CD4-positive, alpha-beta T cell (primary cell): ENCODE measurements at regions of chr3 and their contacts with region 1.

Region 1: DNA sequence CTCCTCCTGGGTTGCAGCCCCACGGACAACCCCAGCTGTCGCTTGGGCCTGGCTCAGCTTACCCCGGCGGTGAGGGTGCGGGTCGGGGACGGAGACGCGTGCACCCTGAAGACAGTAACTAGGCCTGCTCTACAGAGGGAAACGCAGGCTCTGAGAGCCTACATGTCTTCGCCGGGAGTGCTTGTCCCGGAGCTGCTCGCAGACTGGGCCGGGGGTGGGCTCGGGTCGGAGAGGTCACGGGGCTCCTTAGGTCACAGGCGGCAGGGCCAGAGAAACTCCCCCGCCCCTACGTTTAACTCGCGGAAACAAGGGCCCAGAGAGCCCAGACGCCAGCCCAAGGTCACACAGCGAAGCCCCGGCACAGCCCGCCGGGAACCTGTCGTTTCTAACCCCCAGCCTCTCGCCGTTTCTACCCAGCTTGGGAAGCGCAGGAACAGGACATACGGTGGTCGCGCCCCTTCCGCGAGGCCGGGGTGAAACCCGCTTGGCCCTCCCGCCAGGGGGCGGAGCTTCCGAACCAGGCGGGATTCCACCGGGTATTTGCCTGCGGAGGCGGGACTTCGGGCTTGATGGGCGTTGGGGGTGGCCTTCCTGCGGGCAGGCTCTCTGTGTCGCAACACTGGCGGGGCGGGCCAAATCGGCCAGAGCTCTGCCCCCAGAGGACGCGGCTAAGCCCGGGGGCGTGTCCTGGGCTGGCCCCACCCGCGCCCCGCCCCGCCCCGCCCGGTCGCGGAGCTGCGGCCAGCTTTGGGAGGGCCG is at the start of gene HDAC11:
- DNase-seq: peak; percentile 92 to 99 (median 97)
- ATAC-seq: peak; percentile 92
- H3K4me3 ChIP-seq: peak within 1 kb of the TSS; percentile 95
- H3K4me3 Mint-ChIP-seq: peak within 1 kb of the TSS; percentile 97
- H3K27ac ChIP-seq: peak within 1 kb of the TSS; percentile 79 to 80
- H3K27ac Mint-ChIP-seq: peak within 1 kb of the TSS; percentile 96
- H3K4me1 ChIP-seq: peaks cover 36% of the 10 kb centered on the region
- H3K4me1 Mint-ChIP-seq: peaks cover 9% of the 10 kb centered on the region
- H3K27me3 ChIP-seq: no peaks in the 10 kb centered on the region
- H3K27me3 Mint-ChIP-seq: no peaks in the 10 kb centered on the region
- CTCF ChIP-seq: no peak
- total RNA-seq, gene HDAC11: 4.5 to 4.6 TPM

Region 2: GRCh38 chr3:13012228-13012691 is 467.5 kb before region 1 on chr3:
- CTCF ChIA-PET with region 1: no interaction called
- POLR2A ChIA-PET with region 1: interaction called, 5 read pairs
- intact Hi-C with region 1: loop called in 1 of 2 experiments (anchors 10 kb)
- DNase-seq: peak in 11 of 14 experiments; percentile 15 to 86 (median 30)
- ATAC-seq: no peak
- H3K4me3 ChIP-seq: peak overlapping the region; percentile 63
- H3K4me3 Mint-ChIP-seq: peak overlapping the region; percentile 84
- H3K27ac ChIP-seq: peak overlapping the region; percentile 87 to 99
- H3K27ac Mint-ChIP-seq: peak overlapping the region; percentile 98
- H3K4me1 ChIP-seq: peaks cover 100% of the 10 kb centered on the region
- H3K4me1 Mint-ChIP-seq: peaks cover 93% of the 10 kb centered on the region
- H3K27me3 ChIP-seq: no peaks in the 10 kb centered on the region
- H3K27me3 Mint-ChIP-seq: no peaks in the 10 kb centered on the region
- CTCF ChIP-seq: no peak

Region 3: DNA sequence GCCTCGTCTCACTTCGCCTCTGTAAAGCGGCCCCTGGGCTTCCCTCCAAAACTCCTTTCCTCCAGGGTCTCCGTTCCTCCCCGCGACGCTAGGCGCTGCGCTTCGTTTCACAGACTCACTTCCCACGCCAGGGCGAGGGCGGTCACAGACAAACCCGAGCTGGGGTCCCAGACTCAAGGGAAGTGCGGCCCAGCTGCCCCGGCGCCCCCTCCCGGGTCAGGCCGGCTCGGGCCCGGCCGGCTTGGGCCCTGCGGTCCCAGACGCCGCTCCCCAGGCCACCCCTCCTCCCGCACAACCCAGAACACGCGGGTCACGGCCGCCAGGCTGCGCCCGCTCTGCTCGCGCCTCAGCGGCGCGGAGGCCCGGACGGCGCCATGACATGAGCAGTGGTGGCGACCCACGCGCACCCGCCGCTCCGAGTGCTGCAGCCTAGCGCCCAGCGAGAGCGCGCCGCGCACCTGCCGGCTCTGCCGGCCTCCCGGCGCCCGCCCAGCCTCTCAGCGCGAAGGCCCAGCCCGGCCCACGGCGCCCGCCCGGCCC is 60.2 kb before region 1 on chr3:
- CTCF ChIA-PET with region 1: no interaction called
- POLR2A ChIA-PET with region 1: interaction called, 20 read pairs
- intact Hi-C with region 1: loop called in 1 of 2 experiments (anchors 1 kb)
- DNase-seq: peak; percentile 27 to 88 (median 58)
- ATAC-seq: peak; percentile 38
- H3K4me3 ChIP-seq: peak overlapping the region; percentile 85
- H3K4me3 Mint-ChIP-seq: peak overlapping the region; percentile 93
- H3K27ac ChIP-seq: peak overlapping the region; percentile 80 to 89
- H3K27ac Mint-ChIP-seq: peak overlapping the region; percentile 91
- H3K4me1 ChIP-seq: peaks cover 73% of the 10 kb centered on the region
- H3K4me1 Mint-ChIP-seq: peaks cover 71% of the 10 kb centered on the region
- H3K27me3 ChIP-seq: no peaks in the 10 kb centered on the region
- H3K27me3 Mint-ChIP-seq: no peaks in the 10 kb centered on the region
- CTCF ChIP-seq: no peak

Region 4: GRCh38 chr3:13452490-13453335 is 27.0 kb before region 1 on chr3:
- CTCF ChIA-PET with region 1: interaction called, 4 read pairs
- POLR2A ChIA-PET with region 1: interaction called, 21 read pairs
- intact Hi-C with region 1: loop called (anchors 1 to 2 kb)
- DNase-seq: peak in 11 of 14 experiments; percentile 14 to 78 (median 32)
- ATAC-seq: peak; percentile 22
- H3K4me3 ChIP-seq: peak overlapping the region; percentile 71
- H3K4me3 Mint-ChIP-seq: peak overlapping the region; percentile 94
- H3K27ac ChIP-seq: peak overlapping the region in 1 of 2 donors; percentile 72
- H3K27ac Mint-ChIP-seq: peak overlapping the region; percentile 79
- H3K4me1 ChIP-seq: peaks cover 21% of the 10 kb centered on the region
- H3K4me1 Mint-ChIP-seq: peaks cover 28% of the 10 kb centered on the region
- H3K27me3 ChIP-seq: no peaks in the 10 kb centered on the region
- H3K27me3 Mint-ChIP-seq: no peaks in the 10 kb centered on the region
- CTCF ChIP-seq: peak; percentile 79

Region 5: DNA sequence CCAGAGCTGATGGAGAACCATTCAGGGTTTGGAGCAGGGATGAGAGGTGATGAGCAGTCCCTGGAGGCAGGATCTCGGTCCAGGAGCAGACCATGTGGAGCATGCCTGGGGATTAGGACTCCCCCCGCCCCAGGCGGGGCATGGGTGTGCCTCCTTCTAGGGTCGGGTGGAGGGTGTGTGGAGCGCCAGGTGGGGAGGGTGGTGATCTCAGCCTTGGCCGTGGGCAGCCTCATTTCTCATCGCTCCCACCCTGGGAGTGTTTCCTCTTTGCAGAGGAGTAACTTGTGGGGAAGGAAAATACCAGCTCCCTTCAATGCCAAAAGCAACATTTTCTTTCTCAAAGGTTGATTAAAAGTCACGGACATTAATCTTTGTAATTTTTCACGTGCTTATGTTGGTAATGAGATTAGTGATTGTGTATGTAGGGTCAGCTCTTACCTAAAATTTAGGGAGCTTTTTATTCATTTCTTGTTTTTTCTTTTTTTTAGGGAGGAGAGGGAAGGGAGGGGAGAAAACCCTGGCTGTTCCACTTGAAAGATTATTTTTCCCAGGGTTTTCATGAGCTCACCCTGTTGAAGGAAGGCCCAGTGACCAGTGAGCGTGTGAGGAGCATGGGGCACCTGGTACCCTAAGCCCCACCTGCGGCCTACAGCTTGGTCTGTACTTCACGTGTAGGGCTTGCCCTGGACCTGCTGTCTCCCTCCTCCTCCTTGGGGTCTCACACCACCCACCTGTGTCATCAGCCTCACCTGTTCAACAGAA is 80.2 kb after region 1 on chr3:
- CTCF ChIA-PET with region 1: no interaction called
- POLR2A ChIA-PET with region 1: no interaction called
- intact Hi-C with region 1: no loop called
- DNase-seq: no peak
- ATAC-seq: no peak
- H3K4me3 ChIP-seq: no peak overlapping the region
- H3K4me3 Mint-ChIP-seq: no peak overlapping the region
- H3K27ac ChIP-seq: no peak overlapping the region
- H3K27ac Mint-ChIP-seq: no peak overlapping the region
- H3K4me1 ChIP-seq: no peaks in the 10 kb centered on the region
- H3K4me1 Mint-ChIP-seq: no peaks in the 10 kb centered on the region
- H3K27me3 ChIP-seq: peaks cover 0 to 2% of the 10 kb centered on the region in 2 experiments
- H3K27me3 Mint-ChIP-seq: peaks cover 15% of the 10 kb centered on the region
- CTCF ChIP-seq: no peak

Region 6: DNA sequence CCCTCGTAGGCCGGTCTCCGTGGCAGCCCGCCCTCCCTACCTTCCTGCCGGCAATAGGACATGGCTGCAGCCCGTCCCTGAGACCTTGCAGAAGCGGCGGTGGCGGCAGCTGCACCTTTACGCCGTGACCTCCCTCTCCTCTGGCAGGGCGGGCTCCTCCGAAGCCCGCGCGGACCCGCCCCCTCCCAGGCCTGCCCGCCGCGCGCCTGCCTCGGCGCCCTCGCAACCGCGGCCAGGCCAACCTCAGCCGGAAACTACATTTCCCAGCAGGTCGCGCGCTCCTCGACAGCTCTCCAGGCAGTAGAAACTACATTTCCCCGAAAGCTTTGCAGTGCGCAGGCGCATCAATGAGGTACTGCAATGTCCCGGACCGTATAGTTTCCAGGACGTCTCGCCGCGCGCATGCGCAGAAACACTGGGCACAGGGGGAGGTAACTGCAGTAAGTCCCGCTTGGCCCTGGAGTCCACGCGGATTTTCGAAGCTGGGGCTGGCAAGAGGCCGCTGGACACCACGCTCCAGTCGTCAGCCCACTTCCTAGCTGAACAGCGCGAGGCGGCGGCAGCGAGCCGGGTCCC is 644.9 kb after region 1 on chr3 and contains the starts of genes CHCHD4 and TMEM43:
- CTCF ChIA-PET with region 1: no interaction called
- POLR2A ChIA-PET with region 1: interaction called, 10 read pairs
- intact Hi-C with region 1: loop called in 1 of 2 experiments (anchors 5 kb)
- DNase-seq: peak; percentile 94 to 100 (median 98)
- ATAC-seq: peak; percentile 89
- H3K4me3 ChIP-seq: peak within 1 kb of the TSS; percentile 96
- H3K4me3 Mint-ChIP-seq: peak within 1 kb of the TSS; percentile 97
- H3K27ac ChIP-seq: peak within 1 kb of the TSS; percentile 76 to 86
- H3K27ac Mint-ChIP-seq: peak within 1 kb of the TSS; percentile 91
- H3K4me1 ChIP-seq: peaks cover 53% of the 10 kb centered on the region
- H3K4me1 Mint-ChIP-seq: peaks cover 73% of the 10 kb centered on the region
- H3K27me3 ChIP-seq: no peaks in the 10 kb centered on the region
- H3K27me3 Mint-ChIP-seq: no peaks in the 10 kb centered on the region
- CTCF ChIP-seq: no peak
- total RNA-seq, gene CHCHD4: 0.50 to 1.1 TPM
- total RNA-seq, gene TMEM43: 24.8 to 27.6 TPM